ENCODE measurements at regions of chr5 and their contacts with region 1.

Region 1: GRCh38 chr5:146965761-146966659 is 87.5 kb upstream of the PPP2R2B start:
- DNase-seq: peak; percentile 89
- H3K4me3 Mint-ChIP-seq: no peak overlapping the region
- H3K27ac Mint-ChIP-seq: no peak overlapping the region
- H3K4me1 Mint-ChIP-seq: peaks cover 11% of the 10 kb centered on the region
- H3K27me3 Mint-ChIP-seq: peaks cover 24% of the 10 kb centered on the region
- CTCF ChIP-seq: peak; percentile 89

Region 2: DNA sequence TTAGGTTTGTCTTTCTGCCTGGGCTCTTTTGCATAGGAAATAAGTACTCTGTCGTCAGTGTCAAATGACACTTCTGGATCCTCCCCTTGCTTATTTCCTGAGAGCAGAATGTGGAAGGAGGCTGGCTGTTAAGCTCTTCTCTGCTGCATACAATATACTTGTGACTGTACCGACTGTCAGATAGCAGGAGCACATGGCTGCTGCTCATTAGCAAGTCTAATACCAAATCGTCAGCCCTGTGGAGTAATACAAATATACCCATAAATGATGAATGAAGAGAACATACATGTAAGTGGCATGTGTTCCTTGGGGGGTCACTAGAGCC is 449.9 kb before region 1 on chr5 and contains the start of gene GPR151:
- CTCF ChIA-PET with region 1: interaction called, 10 read pairs
- POLR2A ChIA-PET with region 1: no interaction called
- intact Hi-C with region 1: no loop called
- DNase-seq: no peak
- H3K4me3 Mint-ChIP-seq: no peak within 1 kb of the TSS
- H3K27ac Mint-ChIP-seq: no peak within 1 kb of the TSS
- H3K4me1 Mint-ChIP-seq: no peaks in the 10 kb centered on the region
- H3K27me3 Mint-ChIP-seq: no peaks in the 10 kb centered on the region
- CTCF ChIP-seq: no peak
- total RNA-seq, gene GPR151: not detected in 2 replicates

Region 3: GRCh38 chr5:146541958-146542849 is 423.8 kb before region 1 on chr5:
- CTCF ChIA-PET with region 1: interaction called, 485 read pairs
- POLR2A ChIA-PET with region 1: interaction called, 4 read pairs
- intact Hi-C with region 1: loop called (anchors 1 kb)
- DNase-seq: peak; percentile 78
- H3K4me3 Mint-ChIP-seq: no peak overlapping the region
- H3K27ac Mint-ChIP-seq: no peak overlapping the region
- H3K4me1 Mint-ChIP-seq: peaks cover 11% of the 10 kb centered on the region
- H3K27me3 Mint-ChIP-seq: peaks cover 20% of the 10 kb centered on the region
- CTCF ChIP-seq: peak; percentile 99

Region 4: GRCh38 chr5:146595088-146595487 is 370.9 kb before region 1 on chr5:
- CTCF ChIA-PET with region 1: interaction called, 29 read pairs
- POLR2A ChIA-PET with region 1: no interaction called
- intact Hi-C with region 1: no loop called
- DNase-seq: peak; percentile 13
- H3K4me3 Mint-ChIP-seq: no peak overlapping the region
- H3K27ac Mint-ChIP-seq: no peak overlapping the region
- H3K4me1 Mint-ChIP-seq: no peaks in the 10 kb centered on the region
- H3K27me3 Mint-ChIP-seq: peaks cover 25% of the 10 kb centered on the region
- CTCF ChIP-seq: no peak

Region 5: GRCh38 chr5:146947181-146947941 is 18.6 kb before region 1 on chr5:
- CTCF ChIA-PET with region 1: interaction called, 27 read pairs
- POLR2A ChIA-PET with region 1: no interaction called
- intact Hi-C with region 1: no loop called
- DNase-seq: peak; percentile 44
- H3K4me3 Mint-ChIP-seq: no peak overlapping the region
- H3K27ac Mint-ChIP-seq: no peak overlapping the region
- H3K4me1 Mint-ChIP-seq: no peaks in the 10 kb centered on the region
- H3K27me3 Mint-ChIP-seq: no peaks in the 10 kb centered on the region
- CTCF ChIP-seq: peak; percentile 23

Region 6: DNA sequence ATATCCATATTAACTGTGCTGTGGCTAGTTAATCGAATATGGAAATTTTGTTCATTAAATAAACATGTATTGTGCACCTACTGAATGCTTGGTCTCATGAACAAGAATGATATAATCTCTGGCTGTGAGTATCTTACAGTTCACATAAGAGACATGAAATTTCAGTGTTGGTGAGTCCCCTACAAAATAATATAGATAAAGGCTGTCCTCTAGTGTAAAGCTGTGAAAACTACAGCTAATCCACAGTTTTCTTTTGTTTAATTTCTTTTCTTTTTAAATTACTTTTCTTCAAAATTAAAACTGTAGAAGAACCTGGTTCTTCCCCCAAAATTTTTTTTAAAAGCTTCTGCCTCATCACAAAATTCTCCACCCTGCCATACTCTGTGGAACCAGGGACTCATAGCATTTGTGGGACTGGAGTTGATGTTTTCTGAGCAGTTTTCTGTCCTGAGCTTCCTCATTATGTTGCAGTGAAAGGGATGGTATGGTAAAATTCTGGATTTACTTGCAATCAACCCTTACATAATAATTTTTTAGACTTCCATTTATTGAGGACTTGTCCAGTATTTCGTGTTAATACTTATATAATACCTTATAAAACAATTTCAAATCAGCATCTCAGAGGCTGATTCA is 403.8 kb after region 1 on chr5:
- CTCF ChIA-PET with region 1: interaction called, 10 read pairs
- POLR2A ChIA-PET with region 1: no interaction called
- intact Hi-C with region 1: loop called (anchors 1 kb)
- DNase-seq: peak; percentile 36
- H3K4me3 Mint-ChIP-seq: no peak overlapping the region
- H3K27ac Mint-ChIP-seq: no peak overlapping the region
- H3K4me1 Mint-ChIP-seq: no peaks in the 10 kb centered on the region
- H3K27me3 Mint-ChIP-seq: no peaks in the 10 kb centered on the region
- CTCF ChIP-seq: peak; percentile 88